CD8-positive, alpha-beta memory T cell (primary cell): ENCODE measurements at regions of chr1 and their contacts with region 1.

Region 1: DNA sequence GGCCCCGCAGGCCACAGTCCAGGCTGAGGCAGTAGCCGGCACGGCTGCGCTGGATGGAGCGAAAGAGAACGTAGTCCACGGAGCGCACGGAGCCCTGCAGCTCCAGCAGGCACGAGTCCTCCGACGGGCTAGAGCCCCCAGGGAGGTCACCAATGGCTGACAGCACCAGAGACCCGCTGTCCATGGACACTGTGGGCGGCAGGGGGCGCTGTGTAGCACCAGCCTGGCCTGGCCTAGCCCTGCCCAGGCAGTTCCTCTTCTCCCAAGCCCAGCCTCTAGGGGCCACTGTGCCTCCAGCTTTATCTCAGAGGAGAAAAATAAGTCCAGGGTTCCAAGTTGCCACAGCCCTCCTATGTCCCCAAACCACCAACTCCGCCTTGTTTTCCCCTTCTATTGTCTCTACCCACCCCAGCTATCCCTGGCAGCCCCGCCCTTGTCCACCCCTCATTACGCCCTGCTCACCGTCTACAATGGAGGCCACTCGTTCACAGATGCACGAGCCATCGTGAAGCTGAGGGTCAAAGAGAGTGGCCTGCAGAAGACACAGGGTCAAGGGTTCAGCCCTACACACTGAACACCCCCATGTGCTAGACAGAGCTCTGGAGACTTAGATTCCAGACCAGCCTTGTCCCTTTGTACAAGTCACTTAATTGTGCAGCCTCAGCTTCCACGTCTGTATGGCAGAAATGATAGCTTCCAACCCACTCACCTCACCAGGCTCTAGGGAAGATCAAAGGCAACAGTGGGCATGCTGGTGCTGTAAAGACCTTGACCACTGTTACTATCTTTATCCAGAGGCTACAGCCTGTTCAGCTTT is 4.4 kb downstream of the ENTREP3 start:
- DNase-seq: peak; percentile 88 to 97 (median 95)
- H3K4me3 ChIP-seq: peak overlapping the region; percentile 54
- H3K4me3 Mint-ChIP-seq: peak overlapping the region; percentile 17 to 84 (median 59)
- H3K27ac ChIP-seq: no peak overlapping the region
- H3K27ac Mint-ChIP-seq: peak overlapping the region in 4 of 8 donors; percentile 13 to 83 (median 40)
- H3K4me1 ChIP-seq: peaks cover 5% of the 10 kb centered on the region
- H3K4me1 Mint-ChIP-seq: peaks cover 20 to 32% (median 24%) of the 10 kb centered on the region in 3 donors
- H3K27me3 ChIP-seq: no peaks in the 10 kb centered on the region
- H3K27me3 Mint-ChIP-seq: no peaks in the 10 kb centered on the region

Region 2: DNA sequence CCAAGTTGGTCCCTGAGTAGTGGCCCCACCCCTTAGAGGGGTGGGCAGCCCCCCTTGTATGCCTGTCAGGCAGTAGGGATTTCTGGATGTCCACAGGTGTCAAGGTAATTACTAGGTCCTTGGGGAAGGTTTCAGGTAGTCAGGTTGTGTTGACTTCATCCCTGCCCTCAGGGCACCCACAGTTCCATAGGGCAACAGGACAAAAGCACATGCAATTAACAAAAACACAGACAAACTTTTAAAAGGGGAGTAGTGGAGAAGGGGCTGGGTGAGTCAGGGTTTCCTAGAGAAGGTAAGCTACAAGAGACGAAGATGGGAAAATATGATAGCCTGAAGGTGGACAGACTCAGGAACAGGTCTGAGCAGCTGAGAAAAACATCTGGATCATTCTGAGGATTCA is 91.9 kb before region 1 on chr1:
- CTCF ChIA-PET with region 1: no interaction called
- POLR2A ChIA-PET with region 1: no interaction called
- DNase-seq: no peak
- H3K4me3 ChIP-seq: no peak overlapping the region
- H3K4me3 Mint-ChIP-seq: no peak overlapping the region
- H3K27ac ChIP-seq: no peak overlapping the region
- H3K27ac Mint-ChIP-seq: peak overlapping the region in 1 of 8 donors; percentile 88
- H3K4me1 ChIP-seq: no peaks in the 10 kb centered on the region
- H3K4me1 Mint-ChIP-seq: no peaks in the 10 kb centered on the region
- H3K27me3 ChIP-seq: no peaks in the 10 kb centered on the region
- H3K27me3 Mint-ChIP-seq: peaks cover 0 to 3% of the 10 kb centered on the region in 2 donors

Region 3: DNA sequence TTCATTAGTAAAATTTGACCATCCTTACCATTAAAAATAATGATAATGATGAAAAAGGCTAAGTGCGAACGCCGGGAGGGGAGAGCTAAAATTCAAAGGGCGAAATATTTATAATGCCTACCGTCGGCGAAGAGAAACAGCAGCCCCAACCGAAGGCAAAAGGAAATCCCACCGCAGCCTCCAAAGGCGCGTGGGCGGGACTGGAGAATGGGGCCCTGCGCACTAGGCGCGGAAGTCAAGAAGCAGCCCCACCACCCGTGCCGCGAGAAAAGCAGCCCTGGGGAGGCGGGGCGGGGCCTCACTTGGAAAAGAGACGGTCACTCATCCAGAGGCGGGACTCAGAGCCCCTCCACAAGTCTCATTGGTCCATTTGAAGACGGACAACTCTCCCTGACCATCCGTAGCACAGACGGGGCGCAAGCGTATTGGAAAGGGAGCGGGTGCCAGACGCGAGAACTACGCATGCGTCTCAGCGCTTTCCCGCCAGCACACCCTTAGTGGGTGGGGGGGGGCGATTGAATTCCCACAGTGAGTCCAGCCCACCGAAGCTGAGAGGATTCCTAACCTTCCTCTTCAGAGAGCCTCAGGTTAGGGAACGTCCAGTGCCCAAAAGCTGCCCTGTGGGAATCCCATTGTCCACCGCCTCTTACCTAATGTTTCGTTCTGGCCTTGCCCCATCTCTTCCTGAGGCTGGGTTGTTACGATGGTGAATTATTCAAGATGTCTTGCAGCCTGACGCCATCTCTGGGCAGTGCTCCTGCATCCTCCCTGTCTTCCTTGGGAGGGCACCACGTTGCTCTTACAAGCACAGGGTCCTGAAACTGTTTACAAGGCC is 23.4 kb before region 1 on chr1:
- CTCF ChIA-PET with region 1: interaction called, 19 read pairs
- POLR2A ChIA-PET with region 1: no interaction called
- DNase-seq: peak; percentile 97 to 99 (median 98)
- H3K4me3 ChIP-seq: peak overlapping the region; percentile 93
- H3K4me3 Mint-ChIP-seq: peak overlapping the region; percentile 70 to 96 (median 87)
- H3K27ac ChIP-seq: peak overlapping the region; percentile 89
- H3K27ac Mint-ChIP-seq: peak overlapping the region; percentile 82 to 96 (median 94)
- H3K4me1 ChIP-seq: peaks cover 17% of the 10 kb centered on the region
- H3K4me1 Mint-ChIP-seq: peaks cover 23 to 24% (median 24%) of the 10 kb centered on the region in 3 donors
- H3K27me3 ChIP-seq: no peaks in the 10 kb centered on the region
- H3K27me3 Mint-ChIP-seq: peaks cover 0 to 2% of the 10 kb centered on the region in 2 donors

Region 4: DNA sequence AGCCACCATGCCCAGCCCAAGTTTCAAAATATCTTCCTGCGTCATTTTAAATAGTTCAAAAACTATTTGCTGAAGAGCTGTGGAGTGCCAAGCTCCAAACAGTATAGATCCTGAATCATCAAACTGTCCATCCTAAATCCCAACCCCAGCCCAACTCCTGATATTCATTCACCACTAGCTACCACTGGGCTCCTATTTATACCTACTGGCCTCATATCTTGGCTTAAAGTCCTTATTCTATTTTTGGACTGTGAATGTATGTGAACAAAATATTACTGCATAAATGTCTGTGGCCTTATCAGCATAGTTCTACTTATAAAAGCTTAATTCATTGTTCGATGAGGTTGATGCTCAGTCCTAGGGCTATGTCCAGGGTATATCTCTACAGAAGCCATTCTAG is 16.5 kb after region 1 on chr1:
- CTCF ChIA-PET with region 1: interaction called, 79 read pairs
- POLR2A ChIA-PET with region 1: interaction called, 16 read pairs
- DNase-seq: no peak
- H3K4me3 ChIP-seq: no peak overlapping the region
- H3K4me3 Mint-ChIP-seq: no peak overlapping the region
- H3K27ac ChIP-seq: no peak overlapping the region
- H3K27ac Mint-ChIP-seq: peak overlapping the region in 1 of 8 donors; percentile 64
- H3K4me1 ChIP-seq: peaks cover 14% of the 10 kb centered on the region
- H3K4me1 Mint-ChIP-seq: peaks cover 20 to 38% (median 30%) of the 10 kb centered on the region in 3 donors
- H3K27me3 ChIP-seq: no peaks in the 10 kb centered on the region
- H3K27me3 Mint-ChIP-seq: no peaks in the 10 kb centered on the region

Region 5: DNA sequence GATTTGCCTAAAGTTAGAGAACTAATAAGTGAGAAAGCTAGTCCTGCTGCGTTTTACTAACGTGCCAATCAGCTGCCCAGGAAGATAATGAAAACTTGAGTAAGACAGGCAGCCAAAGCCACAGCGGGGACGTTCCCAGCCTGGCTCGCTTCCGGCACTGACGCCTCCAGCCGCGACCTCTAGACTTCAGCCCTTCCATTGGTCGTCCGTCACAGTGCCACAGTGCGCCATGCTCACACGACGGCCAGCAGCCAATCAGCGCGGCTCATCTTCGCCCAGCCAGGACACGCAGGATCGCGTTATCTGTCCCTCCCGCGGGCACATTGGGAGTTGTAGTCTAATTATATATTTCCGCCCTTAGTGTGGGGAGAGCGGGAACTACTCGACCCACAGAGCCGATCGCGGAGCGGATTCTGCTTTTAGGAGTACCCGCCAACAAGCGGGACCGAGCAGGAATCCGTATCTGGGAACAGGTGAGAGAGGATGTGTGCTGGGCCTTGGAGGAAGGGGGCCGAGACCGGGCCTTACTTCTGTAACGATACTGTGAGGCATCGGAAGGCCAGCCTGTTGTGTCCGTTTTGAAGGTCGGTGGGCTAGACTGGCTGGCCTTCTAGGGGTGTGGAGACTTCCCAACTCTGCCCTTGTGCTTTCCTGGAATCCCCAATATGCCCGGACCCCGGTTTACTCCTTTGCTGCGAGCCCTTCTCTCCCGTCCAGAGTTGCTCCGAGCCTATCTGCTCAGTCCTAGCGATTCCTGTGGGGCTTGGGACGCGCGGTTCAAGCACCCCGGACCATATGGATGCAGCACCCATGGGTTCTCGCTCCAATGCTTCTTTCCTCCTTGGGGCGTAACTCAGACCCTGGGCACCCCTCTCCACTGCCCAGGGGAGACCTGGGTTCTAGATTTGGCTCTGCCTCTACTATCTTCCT is 57.9 kb after region 1 on chr1 and contains the start of gene FDPS:
- CTCF ChIA-PET with region 1: interaction called, 23 read pairs
- POLR2A ChIA-PET with region 1: no interaction called
- DNase-seq: peak; percentile 96 to 98 (median 97)
- H3K4me3 ChIP-seq: peak within 1 kb of the TSS; percentile 94
- H3K4me3 Mint-ChIP-seq: peak within 1 kb of the TSS; percentile 88 to 98 (median 97)
- H3K27ac ChIP-seq: peak within 1 kb of the TSS; percentile 93
- H3K27ac Mint-ChIP-seq: peak within 1 kb of the TSS; percentile 85 to 99 (median 98)
- H3K4me1 ChIP-seq: peaks cover 24% of the 10 kb centered on the region
- H3K4me1 Mint-ChIP-seq: peaks cover 20 to 34% (median 31%) of the 10 kb centered on the region in 3 donors
- H3K27me3 ChIP-seq: no peaks in the 10 kb centered on the region
- H3K27me3 Mint-ChIP-seq: no peaks in the 10 kb centered on the region
- total RNA-seq, gene FDPS: 194 to 199 TPM

Region 6: GRCh38 chr1:155591770-155592169 is 340.9 kb after region 1 on chr1:
- CTCF ChIA-PET with region 1: interaction called, 29 read pairs
- POLR2A ChIA-PET with region 1: no interaction called
- DNase-seq: peak in 3 of 5 donors; percentile 3 to 59 (median 54)
- H3K4me3 ChIP-seq: no peak overlapping the region
- H3K4me3 Mint-ChIP-seq: no peak overlapping the region
- H3K27ac ChIP-seq: no peak overlapping the region
- H3K27ac Mint-ChIP-seq: peak overlapping the region in 1 of 8 donors; percentile 29
- H3K4me1 ChIP-seq: no peaks in the 10 kb centered on the region
- H3K4me1 Mint-ChIP-seq: peaks cover 0 to 3% (median 2%) of the 10 kb centered on the region in 3 donors
- H3K27me3 ChIP-seq: no peaks in the 10 kb centered on the region
- H3K27me3 Mint-ChIP-seq: peaks cover 0 to 1% of the 10 kb centered on the region in 2 donors